CD8-positive, alpha-beta T cell (primary cell): ENCODE measurements at regions of chr1 and their contacts with region 1.

Region 1: GRCh38 chr1:167803358-167804207 is 81.8 kb downstream of the MPZL1 start:
- DNase-seq: peak; percentile 58 to 89 (median 86)
- ATAC-seq: peak; percentile 81
- H3K4me3 ChIP-seq: no peak overlapping the region
- H3K4me3 Mint-ChIP-seq: peak overlapping the region; percentile 58
- H3K27ac ChIP-seq: no peak overlapping the region
- H3K27ac Mint-ChIP-seq: peak overlapping the region; percentile 47
- H3K4me1 ChIP-seq: peaks cover 21% of the 10 kb centered on the region
- H3K4me1 Mint-ChIP-seq: peaks cover 24% of the 10 kb centered on the region
- H3K27me3 ChIP-seq: no peaks in the 10 kb centered on the region
- H3K27me3 Mint-ChIP-seq: no peaks in the 10 kb centered on the region
- CTCF ChIP-seq: peak; percentile 86

Region 2: DNA sequence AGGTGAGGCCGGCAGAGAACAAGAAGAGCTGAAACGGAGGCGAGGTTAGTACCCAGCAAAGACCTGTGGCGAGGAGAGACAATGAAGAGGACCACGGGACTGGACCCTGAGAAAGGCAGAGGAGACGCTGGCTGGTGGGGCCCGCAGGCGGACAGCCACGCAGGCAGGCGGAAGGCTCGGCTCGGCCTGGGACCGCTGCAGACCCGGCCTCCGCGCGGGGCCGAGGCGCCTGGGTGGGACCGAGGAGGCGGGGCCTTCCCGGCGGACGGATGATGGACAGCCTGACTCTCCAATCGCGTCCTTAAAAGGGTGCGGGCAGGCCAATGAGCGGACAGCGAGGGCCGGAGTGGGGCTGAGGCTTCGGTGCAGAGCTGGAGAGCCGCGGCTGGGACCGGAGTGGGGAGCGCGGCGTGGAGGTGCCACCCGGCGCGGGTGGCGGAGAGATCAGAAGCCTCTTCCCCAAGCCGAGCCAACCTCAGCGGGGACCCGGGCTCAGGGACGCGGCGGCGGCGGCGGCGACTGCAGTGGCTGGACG is 81.9 kb before region 1 on chr1 and contains the start of gene MPZL1:
- CTCF ChIA-PET with region 1: interaction called, 4 read pairs
- POLR2A ChIA-PET with region 1: no interaction called
- intact Hi-C with region 1: loop called in 1 of 2 experiments (anchors 2 kb)
- DNase-seq: peak; percentile 81 to 97 (median 92)
- ATAC-seq: peak; percentile 94
- H3K4me3 ChIP-seq: peak within 1 kb of the TSS; percentile 57 to 69
- H3K4me3 Mint-ChIP-seq: peak within 1 kb of the TSS; percentile 95
- H3K27ac ChIP-seq: peak within 1 kb of the TSS; percentile 14 to 28
- H3K27ac Mint-ChIP-seq: peak within 1 kb of the TSS; percentile 82
- H3K4me1 ChIP-seq: peaks cover 16% of the 10 kb centered on the region
- H3K4me1 Mint-ChIP-seq: peaks cover 40% of the 10 kb centered on the region
- H3K27me3 ChIP-seq: no peaks in the 10 kb centered on the region
- H3K27me3 Mint-ChIP-seq: no peaks in the 10 kb centered on the region
- CTCF ChIP-seq: no peak
- total RNA-seq, gene MPZL1: 0.67 to 0.81 TPM

Region 3: GRCh38 chr1:168065506-168065905 is 261.9 kb after region 1 on chr1:
- CTCF ChIA-PET with region 1: interaction called, 3 read pairs
- POLR2A ChIA-PET with region 1: no interaction called
- intact Hi-C with region 1: loop called in 1 of 2 experiments (anchors 10 kb)
- DNase-seq: no peak
- ATAC-seq: no peak
- H3K4me3 ChIP-seq: no peak overlapping the region
- H3K4me3 Mint-ChIP-seq: no peak overlapping the region
- H3K27ac ChIP-seq: no peak overlapping the region
- H3K27ac Mint-ChIP-seq: no peak overlapping the region
- H3K4me1 ChIP-seq: no peaks in the 10 kb centered on the region
- H3K4me1 Mint-ChIP-seq: no peaks in the 10 kb centered on the region
- H3K27me3 ChIP-seq: no peaks in the 10 kb centered on the region
- H3K27me3 Mint-ChIP-seq: no peaks in the 10 kb centered on the region
- CTCF ChIP-seq: no peak